ENCODE measurements at regions of chr13 and their contacts with region 1.

Region 1: GRCh38 chr13:43804461-43805070 is 17.8 kb upstream of the ENOX1 start:
- DNase-seq: no peak
- ATAC-seq: peak; percentile 75

Region 2: DNA sequence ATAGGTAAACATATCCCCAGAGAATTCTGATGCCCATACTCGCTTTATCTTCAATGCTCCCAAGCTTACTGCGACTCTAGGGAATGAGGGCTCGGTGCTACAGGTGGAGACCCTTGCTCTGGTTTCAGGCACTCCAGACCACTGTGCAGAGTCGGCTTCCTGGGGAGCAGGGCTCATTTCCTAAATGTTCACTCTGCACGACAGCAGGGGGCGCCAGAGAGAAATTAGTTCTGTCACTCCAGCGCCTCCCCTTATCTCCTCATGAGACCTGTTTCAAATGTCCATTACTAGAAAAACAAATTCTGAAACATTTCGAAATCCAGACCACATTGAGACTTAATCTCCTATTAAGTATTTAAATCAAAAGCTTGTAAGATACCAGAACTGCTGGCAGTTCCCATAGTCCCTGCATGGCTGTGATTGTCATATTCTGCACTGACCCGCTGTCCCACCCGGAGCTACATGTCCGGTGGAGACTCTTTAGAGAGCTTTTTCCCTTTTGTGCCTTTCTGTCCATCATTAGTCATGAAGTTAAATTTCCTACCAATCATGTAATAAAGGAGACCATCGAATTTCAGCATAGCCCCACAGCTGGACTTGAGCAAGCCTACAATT is 834.9 kb before region 1 on chr13:
- intact Hi-C with region 1: loop called (anchors 10 kb)
- DNase-seq: peak; percentile 87
- ATAC-seq: peak; percentile 94

Region 3: GRCh38 chr13:43085545-43085944 is 719.0 kb before region 1 on chr13:
- intact Hi-C with region 1: loop called (anchors 10 kb)
- DNase-seq: no peak
- ATAC-seq: no peak

Region 4: GRCh38 chr13:43196086-43196621 is 608.4 kb before region 1 on chr13:
- intact Hi-C with region 1: loop called (anchors 10 kb)
- DNase-seq: peak; percentile 61
- ATAC-seq: peak; percentile 88

Region 5: DNA sequence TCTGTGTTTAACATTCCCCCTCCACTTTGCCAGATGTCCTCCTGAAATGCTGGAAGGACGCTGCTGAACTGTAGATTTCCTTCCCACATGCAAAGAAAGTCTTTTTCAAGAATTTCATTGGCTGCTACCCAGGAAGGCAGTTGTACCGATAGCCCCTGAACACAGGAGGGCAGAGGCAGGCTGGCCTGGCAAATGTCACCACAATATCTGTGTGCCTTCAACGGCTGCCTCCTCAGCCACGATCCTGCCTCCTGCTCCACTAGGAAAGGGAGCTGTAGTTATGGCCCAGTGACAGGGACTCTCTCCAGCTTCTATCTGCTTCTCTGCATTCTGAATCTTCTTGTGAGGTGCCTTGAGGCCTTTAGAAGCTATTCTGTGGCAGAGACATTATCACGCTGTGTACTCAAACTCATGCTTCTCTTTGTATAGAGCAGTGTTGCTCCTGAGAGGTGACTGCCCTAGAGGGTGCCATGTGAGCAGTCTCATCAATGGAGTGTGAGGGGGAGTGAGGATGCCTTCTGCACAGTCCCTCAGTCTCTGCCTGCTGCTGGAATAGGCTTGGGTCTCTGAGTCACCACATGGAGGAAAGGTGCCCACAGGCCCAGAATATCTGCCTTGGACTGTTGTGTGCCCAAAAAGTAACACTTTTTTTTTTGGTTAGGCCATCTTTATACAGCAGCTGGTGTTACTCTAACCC is 501.4 kb before region 1 on chr13:
- intact Hi-C with region 1: loop called (anchors 5 kb)
- DNase-seq: peak; percentile 74
- ATAC-seq: peak; percentile 91